ENCODE measurements at regions of chr7 and their contacts with region 1.

Region 1: DNA sequence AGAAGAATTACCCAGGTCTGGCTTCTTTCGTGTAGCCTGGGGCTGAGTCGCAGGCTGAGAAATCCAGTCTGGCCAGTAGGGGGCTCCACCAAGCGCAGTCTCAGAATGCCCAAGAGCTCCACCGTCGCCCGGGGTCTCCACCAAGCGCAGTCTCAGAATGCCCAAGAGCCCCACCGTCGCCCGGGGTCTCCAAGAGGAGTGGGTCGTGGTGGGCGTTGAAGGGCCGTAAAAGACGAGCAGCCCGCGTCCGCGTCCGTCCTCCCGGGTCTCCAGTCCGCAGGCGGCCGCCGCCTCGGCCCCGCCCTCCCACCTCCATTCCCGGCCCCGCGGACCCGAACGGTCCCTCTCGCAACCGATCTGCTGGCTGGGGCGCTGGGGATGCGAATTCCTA is 895 bp upstream of the ZYX start:
- DNase-seq: peak; percentile 90
- H3K4me3 Mint-ChIP-seq: peak overlapping the region; percentile 83
- H3K27ac Mint-ChIP-seq: peak overlapping the region; percentile 91
- H3K4me1 Mint-ChIP-seq: peaks cover 43% of the 10 kb centered on the region
- H3K27me3 Mint-ChIP-seq: no peaks in the 10 kb centered on the region

Region 2: GRCh38 chr7:143299840-143300239 is 80.4 kb before region 1 on chr7:
- CTCF ChIA-PET with region 1: interaction called, 15 read pairs
- POLR2A ChIA-PET with region 1: interaction called, 8 read pairs
- DNase-seq: peak; percentile 67
- H3K4me3 Mint-ChIP-seq: no peak overlapping the region
- H3K27ac Mint-ChIP-seq: peak overlapping the region; percentile 47
- H3K4me1 Mint-ChIP-seq: peaks cover 72% of the 10 kb centered on the region
- H3K27me3 Mint-ChIP-seq: no peaks in the 10 kb centered on the region

Region 3: DNA sequence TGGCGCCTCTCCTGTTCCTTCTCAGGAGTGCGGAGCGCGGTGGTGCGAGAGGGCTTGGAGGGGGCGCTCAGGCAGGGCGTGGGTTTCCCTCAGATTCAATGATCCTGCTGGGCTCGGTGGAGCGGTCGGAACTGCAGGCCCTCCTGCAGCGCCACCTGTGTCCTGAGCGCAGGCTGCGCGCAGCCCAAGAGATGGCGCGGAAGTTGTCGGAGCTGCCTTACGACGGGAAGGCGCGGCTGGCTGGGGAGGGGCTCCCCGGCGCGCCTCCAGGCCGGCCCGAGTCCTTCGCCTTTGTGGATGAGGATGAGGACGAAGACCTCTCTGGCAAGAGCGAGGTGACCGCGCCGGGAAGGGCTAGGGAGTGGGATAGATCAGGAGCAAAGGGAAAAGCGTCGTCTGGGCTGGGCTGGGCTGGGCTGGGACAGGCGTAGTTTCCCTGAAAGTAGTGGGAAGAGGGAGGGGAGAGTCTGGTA is 34.8 kb before region 1 on chr7:
- CTCF ChIA-PET with region 1: interaction called, 12 read pairs
- POLR2A ChIA-PET with region 1: interaction called, 6 read pairs
- DNase-seq: peak; percentile 75
- H3K4me3 Mint-ChIP-seq: peak overlapping the region; percentile 59
- H3K27ac Mint-ChIP-seq: no peak overlapping the region
- H3K4me1 Mint-ChIP-seq: peaks cover 11% of the 10 kb centered on the region
- H3K27me3 Mint-ChIP-seq: peaks cover 33% of the 10 kb centered on the region

Region 4: DNA sequence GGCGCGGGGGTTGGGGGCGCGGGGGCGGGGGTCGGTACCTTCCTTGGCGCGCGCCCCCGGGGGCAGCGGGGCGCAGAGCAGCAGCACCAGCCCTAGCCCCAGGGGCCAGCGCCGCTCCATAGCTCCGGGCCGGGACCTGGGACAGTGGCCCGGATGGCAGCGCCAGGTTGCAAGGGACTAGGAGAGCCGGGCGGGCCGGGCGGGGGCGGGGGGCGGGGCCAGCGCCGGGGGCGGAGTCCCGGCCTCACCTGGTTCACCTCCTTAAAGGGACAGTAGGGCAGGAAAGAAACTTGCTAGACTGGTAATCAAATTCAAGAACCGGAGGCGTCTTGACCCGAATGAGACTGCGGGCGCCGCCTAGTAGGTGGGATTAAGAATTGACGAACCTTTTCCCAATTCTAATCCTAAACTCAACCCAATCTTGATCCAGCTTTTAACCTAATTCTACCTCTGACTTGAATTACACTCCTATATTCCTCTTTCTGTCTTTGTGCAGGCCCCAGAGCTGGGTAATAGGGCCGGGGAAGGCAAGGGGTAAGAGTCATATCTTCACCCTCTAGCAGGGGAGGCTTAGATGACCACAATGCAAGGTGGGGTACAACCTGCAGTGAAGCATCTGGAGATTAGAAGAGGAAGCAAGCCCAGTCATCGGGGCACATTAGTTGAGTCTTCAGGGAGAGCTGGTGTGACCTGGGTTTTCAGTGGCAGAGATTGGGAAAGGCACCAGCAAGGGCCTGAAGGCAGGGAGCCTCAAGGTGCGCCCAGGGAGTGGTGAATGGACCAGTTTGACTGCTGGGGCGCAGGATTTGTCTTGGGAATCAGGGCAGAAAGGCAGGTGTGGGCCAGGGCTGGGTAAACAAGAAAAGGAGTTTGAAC is 28.7 kb after region 1 on chr7 and contains the start of gene EPHA1:
- CTCF ChIA-PET with region 1: interaction called, 21 read pairs
- POLR2A ChIA-PET with region 1: interaction called, 20 read pairs
- DNase-seq: peak; percentile 35
- H3K4me3 Mint-ChIP-seq: peak within 1 kb of the TSS; percentile 62
- H3K27ac Mint-ChIP-seq: no peak within 1 kb of the TSS
- H3K4me1 Mint-ChIP-seq: peaks cover 33% of the 10 kb centered on the region
- H3K27me3 Mint-ChIP-seq: peaks cover 12% of the 10 kb centered on the region
- total RNA-seq, gene EPHA1: 1.1 to 1.2 TPM

Measured in activated CD4-positive, alpha-beta memory T cell treated with anti-CD3 and anti-CD28 coated beads, Interleukin-2, amount 10 ng/mL, durations not matched to agents 7 days and 5 days (primary cell).